Right ventricle myocardium inferior (tissue), 1 donor: ENCODE measurements at regions of chr9 and their contacts with region 1.

Region 1: GRCh38 chr9:127021664-127022363 is 100.6 kb downstream of the ANGPTL2 start:
- DNase-seq: peak; percentile 92
- ATAC-seq: peak; percentile 98

Region 2: DNA sequence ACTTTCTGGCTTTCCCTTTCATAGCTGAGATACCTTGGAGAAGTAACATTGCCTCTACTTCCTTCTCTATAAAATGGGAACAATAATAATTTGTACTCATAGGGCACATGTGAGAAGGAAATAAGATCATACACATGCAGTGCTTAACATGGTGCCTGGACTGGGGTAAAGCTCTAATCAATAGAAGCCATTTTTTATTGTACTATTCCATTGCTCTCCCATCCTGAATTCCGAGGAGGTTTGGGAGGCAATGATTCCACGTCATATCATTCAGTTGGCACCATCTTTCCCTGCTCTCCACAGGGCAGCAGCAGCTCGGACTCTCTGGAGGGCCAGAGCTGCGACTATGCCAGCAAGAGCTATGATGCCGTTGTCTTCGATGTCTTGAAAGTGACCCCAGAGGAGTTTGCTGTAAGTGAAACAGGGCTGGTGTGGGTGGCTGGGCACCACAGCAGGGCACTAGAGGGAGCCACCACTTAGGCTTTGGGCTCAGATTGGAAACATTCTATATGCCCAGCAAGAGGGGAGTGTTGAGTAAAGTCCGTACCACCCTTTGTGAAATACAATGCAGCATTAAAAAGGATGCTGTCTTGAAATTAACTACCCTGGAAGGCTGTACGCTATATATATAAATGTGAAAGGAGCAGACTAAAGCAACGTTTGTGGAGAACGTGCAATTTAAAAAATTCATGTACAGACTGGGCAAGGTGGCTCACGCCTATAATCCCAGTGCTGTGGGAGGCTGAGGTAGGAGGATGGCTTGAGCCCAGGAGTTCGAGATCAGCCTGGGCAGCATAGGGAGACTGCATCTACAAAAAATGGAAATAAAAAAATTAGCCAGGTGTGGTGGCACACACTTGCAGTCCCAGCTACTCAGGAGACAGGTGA is 56.0 kb before region 1 on chr9:
- intact Hi-C with region 1: loop called (anchors 5 kb)
- DNase-seq: no peak
- ATAC-seq: peak; percentile 79

Region 3: GRCh38 chr9:126985870-126986498 is 35.8 kb before region 1 on chr9:
- intact Hi-C with region 1: loop called (anchors 5 kb)
- DNase-seq: peak; percentile 83
- ATAC-seq: peak; percentile 57